Heart left ventricle (tissue), 16 donors: ENCODE measurements at regions of chr12 and their contacts with region 1.

Region 1: DNA sequence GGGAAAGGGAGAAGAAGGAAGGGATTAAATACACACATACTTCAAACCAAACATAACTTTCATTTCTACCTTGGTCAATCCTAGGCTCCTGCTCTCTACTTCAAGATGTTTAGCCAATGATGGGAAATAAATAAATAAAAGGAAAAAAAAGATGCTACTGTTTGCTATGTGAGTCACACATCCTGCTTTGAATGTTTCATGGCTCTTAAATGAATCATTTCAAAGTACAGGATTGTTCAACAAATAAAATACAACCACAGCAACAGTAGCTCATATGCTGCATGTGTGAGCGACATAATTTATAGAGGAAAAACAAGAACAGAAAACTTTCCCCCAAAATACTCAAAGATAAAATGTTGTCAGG is 54.3 kb upstream of the NPFF start:
- DNase-seq: no peak
- ATAC-seq: peak in 3 of 4 donors; percentile 48 to 75 (median 51)
- H3K4me3 ChIP-seq: no peak overlapping the region
- H3K27ac ChIP-seq: peak overlapping the region in 6 of 12 donors; percentile 33 to 52 (median 42)
- H3K4me1 ChIP-seq: peaks cover 0 to 68% (median 23%) of the 10 kb centered on the region in 12 donors
- H3K27me3 ChIP-seq: no peaks in the 10 kb centered on the region
- CTCF ChIP-seq: no peak
- POLR2A ChIP-seq: no peak

Region 2: GRCh38 chr12:53014709-53015108 is 546.9 kb before region 1 on chr12:
- intact Hi-C with region 1: no loop called
- DNase-seq: no peak
- ATAC-seq: no peak
- H3K4me3 ChIP-seq: no peak overlapping the region
- H3K27ac ChIP-seq: no peak overlapping the region
- H3K4me1 ChIP-seq: peaks cover 0 to 41% (median 8%) of the 10 kb centered on the region in 12 donors
- H3K27me3 ChIP-seq: no peaks in the 10 kb centered on the region
- CTCF ChIP-seq: no peak
- POLR2A ChIP-seq: no peak

Region 3: DNA sequence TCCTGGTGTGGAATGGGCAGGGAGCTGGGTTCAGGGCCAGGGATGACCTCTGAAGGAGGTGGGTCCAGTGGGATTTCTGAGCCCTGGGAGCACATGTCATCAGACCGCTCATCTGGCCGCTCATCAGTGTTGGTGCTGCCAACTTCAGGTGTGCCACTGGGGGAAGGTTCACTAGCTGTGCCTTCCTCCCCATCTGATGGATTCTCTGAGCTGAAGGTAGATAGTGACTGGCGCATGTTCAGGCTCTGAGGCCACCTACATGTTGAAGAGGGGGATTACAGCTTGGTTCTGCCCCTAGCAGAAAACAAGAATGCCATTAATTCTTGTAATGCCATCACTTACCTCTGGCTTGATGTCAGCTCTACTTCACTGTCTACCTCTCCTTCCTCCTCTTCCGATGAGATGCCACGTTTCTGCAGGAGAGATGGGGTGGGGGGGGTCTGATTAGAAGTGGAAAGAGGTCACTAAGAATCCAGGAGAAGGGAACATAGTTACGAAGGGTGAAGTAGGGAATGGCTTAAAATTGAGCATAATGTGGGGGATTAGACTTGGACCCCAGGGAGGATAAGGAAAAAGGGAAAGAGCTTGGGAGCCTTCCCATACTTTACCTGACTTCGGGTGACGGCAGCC is 79.5 kb before region 1 on chr12:
- intact Hi-C with region 1: no loop called
- DNase-seq: no peak
- ATAC-seq: peak in 1 of 4 donors; percentile 2
- H3K4me3 ChIP-seq: no peak overlapping the region
- H3K27ac ChIP-seq: peak overlapping the region in 1 of 12 donors; percentile 31
- H3K4me1 ChIP-seq: peaks cover 0 to 43% (median 15%) of the 10 kb centered on the region in 12 donors
- H3K27me3 ChIP-seq: no peaks in the 10 kb centered on the region
- CTCF ChIP-seq: no peak
- POLR2A ChIP-seq: no peak

Region 4: DNA sequence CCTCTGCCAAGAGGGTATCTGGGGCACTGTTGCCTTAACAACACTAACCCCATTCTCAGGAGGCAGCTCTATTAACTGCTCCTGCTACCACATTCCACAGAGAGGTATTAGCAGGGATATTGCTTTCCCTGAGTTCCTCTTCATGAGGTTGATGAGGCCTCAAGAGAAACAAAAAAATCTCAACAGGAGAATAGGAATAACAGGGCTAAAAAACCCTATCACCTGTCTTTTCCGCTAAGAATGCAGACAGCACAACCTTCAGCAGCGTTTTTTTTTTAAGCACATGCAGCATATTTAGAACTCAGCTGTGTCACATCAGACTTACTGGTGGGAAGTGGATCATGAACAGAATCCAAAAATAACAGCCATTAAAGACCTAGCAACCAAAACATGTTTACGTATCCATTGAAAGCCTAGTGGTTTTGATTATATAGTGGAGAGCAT is 35.4 kb after region 1 on chr12:
- intact Hi-C with region 1: loop called in 1 of 10 experiments (anchors 5 kb)
- DNase-seq: no peak
- ATAC-seq: peak; percentile 84 to 94 (median 88)
- H3K4me3 ChIP-seq: peak overlapping the region in 4 of 12 donors; percentile 0 to 16 (median 10)
- H3K27ac ChIP-seq: peak overlapping the region; percentile 28 to 84 (median 72)
- H3K4me1 ChIP-seq: peaks cover 0 to 81% (median 60%) of the 10 kb centered on the region in 12 donors
- H3K27me3 ChIP-seq: no peaks in the 10 kb centered on the region
- CTCF ChIP-seq: no peak
- POLR2A ChIP-seq: no peak

Region 5: DNA sequence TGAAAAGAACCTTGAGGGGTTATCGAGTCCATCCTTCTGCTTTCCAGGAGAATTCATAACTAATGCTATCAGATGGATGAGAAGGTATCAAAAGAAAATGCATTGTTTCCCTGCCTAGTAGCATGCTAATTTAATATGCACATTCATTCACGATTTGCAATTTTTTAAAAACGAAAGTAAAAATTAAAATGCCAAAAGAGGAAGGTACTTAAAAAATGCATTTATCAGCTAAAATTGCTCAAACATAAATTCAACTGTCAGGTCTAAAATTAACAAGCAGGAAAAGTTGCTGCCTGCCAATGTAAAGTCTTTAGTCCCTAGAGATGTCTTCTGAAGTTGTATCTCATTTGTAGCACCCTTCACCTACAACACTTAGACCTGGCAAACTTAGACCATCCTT is 56.7 kb after region 1 on chr12:
- intact Hi-C with region 1: loop called in 1 of 10 experiments (anchors 10 kb)
- DNase-seq: no peak
- ATAC-seq: peak in 1 of 4 donors; percentile 8
- H3K4me3 ChIP-seq: peak overlapping the region in 10 of 12 donors; percentile 4 to 53 (median 25)
- H3K27ac ChIP-seq: peak overlapping the region in 11 of 12 donors; percentile 25 to 84 (median 58)
- H3K4me1 ChIP-seq: peaks cover 2 to 70% (median 38%) of the 10 kb centered on the region in 12 donors
- H3K27me3 ChIP-seq: no peaks in the 10 kb centered on the region
- CTCF ChIP-seq: no peak
- POLR2A ChIP-seq: no peak

Region 6: GRCh38 chr12:54017878-54018467 is 456.4 kb after region 1 on chr12:
- intact Hi-C with region 1: no loop called
- DNase-seq: peak; percentile 38 to 86 (median 67)
- ATAC-seq: peak; percentile 63 to 88 (median 86)
- H3K4me3 ChIP-seq: peak overlapping the region; percentile 13 to 56 (median 48)
- H3K27ac ChIP-seq: peak overlapping the region in 3 of 12 donors; percentile 24 to 39 (median 25)
- H3K4me1 ChIP-seq: peaks cover 0 to 50% (median 24%) of the 10 kb centered on the region in 12 donors
- H3K27me3 ChIP-seq: peaks cover 48 to 97% (median 79%) of the 10 kb centered on the region in 9 donors
- CTCF ChIP-seq: peak in 1 of 12 donors; percentile 7
- POLR2A ChIP-seq: no peak